MCF 10A (cell line): ENCODE measurements at regions of chr12 and their contacts with region 1.

Region 1: DNA sequence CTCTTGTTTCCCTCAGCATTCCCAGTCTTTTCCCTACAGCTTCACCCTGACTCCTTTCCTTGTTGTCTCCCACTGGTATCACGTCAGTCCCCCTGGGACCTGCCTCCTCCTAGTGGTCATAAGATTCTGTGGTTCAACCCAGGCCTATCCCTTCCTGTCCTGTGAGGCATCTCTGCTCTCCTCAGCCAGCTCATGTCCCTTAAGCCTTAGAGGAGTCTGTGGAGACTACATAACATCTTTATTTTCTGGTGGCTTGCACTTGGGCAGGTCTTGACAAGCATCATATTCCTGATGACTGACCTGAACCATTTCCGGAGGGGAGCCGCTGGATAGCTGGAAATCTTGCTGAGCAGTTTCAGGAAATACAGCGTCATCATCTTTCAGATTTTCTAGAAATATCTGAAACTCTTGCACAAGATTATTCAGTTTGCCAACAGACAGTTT is 688 bp downstream of the C12orf71 start:
- DNase-seq: peak; percentile 92
- H3K4me3 Mint-ChIP-seq: no peak overlapping the region
- H3K27ac Mint-ChIP-seq: peak overlapping the region; percentile 78
- H3K4me1 Mint-ChIP-seq: peaks cover 23% of the 10 kb centered on the region
- H3K27me3 Mint-ChIP-seq: no peaks in the 10 kb centered on the region
- CTCF ChIP-seq: peak; percentile 15

Region 2: GRCh38 chr12:27024291-27024690 is 57.4 kb before region 1 on chr12:
- CTCF ChIA-PET with region 1: interaction called, 5 read pairs
- POLR2A ChIA-PET with region 1: interaction called, 18 read pairs
- intact Hi-C with region 1: loop called (anchors 2 kb)
- DNase-seq: no peak
- H3K4me3 Mint-ChIP-seq: no peak overlapping the region
- H3K27ac Mint-ChIP-seq: no peak overlapping the region
- H3K4me1 Mint-ChIP-seq: peaks cover 21% of the 10 kb centered on the region
- H3K27me3 Mint-ChIP-seq: no peaks in the 10 kb centered on the region
- CTCF ChIP-seq: no peak

Region 3: DNA sequence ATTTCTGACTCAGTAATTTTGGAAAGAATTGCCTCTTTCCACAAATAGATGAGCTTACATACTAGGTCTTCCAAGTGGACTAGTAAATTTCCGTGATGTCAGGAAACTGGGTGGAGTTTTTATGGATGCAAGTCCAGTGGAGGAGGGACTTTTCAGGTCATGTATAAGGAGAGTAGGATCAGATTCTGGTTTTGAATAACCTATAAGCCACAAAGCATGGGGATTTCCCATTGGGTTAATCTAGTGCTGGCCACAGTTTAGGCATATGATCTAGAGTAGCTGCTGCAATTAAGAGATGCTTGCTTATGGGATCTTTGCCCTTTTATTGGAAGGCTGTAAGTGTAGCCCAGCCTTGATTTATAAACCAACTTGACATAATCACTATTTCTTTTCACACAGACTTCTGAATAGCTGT is 196.2 kb after region 1 on chr12:
- CTCF ChIA-PET with region 1: no interaction called
- POLR2A ChIA-PET with region 1: no interaction called
- intact Hi-C with region 1: no loop called
- DNase-seq: peak; percentile 80
- H3K4me3 Mint-ChIP-seq: no peak overlapping the region
- H3K27ac Mint-ChIP-seq: no peak overlapping the region
- H3K4me1 Mint-ChIP-seq: peaks cover 6% of the 10 kb centered on the region
- H3K27me3 Mint-ChIP-seq: no peaks in the 10 kb centered on the region
- CTCF ChIP-seq: no peak